ENCODE measurements at regions of chr12 and their contacts with region 1.

Region 1: DNA sequence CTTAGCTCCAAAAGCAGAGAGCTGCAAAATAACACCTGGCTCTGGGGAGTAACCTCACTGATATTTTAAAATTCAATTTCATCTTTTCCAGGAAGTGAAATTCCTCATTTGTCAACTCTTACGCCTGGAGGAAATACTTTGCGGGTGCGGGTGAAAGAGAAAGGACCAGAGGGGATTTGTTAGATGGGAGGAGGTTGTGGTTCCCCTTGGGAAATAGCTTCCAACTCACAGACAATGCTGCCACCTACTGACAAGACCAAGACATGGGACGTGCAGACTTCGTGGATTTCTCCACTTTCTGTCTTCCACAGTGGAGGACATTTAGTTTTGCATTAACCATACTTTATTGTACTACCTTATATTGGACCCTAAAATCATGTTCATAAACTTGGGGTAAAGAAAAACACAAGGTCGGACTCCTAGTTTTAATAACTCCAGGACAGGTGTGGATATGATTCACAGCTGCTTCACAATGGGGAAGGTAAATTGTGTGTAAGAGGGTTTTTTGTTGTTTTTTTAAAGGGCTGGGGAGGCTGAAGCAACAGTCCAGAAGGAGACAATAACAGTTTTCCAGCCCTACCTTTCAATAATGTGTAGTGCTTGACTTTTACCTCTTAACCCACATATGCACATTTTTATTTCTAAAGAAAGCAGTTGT is 10.8 kb downstream of the FBXL14 start:
- DNase-seq: peak in 1 of 2 donors; percentile 80
- ATAC-seq: peak; percentile 54 to 87 (median 84)
- H3K4me3 ChIP-seq: peak overlapping the region in 6 of 10 donors; percentile 11 to 36 (median 19)
- H3K27ac ChIP-seq: no peak overlapping the region
- H3K4me1 ChIP-seq: peaks cover 6 to 41% (median 26%) of the 10 kb centered on the region in 9 donors
- H3K27me3 ChIP-seq: no peaks in the 10 kb centered on the region
- CTCF ChIP-seq: peak; percentile 53 to 94 (median 90)

Region 2: DNA sequence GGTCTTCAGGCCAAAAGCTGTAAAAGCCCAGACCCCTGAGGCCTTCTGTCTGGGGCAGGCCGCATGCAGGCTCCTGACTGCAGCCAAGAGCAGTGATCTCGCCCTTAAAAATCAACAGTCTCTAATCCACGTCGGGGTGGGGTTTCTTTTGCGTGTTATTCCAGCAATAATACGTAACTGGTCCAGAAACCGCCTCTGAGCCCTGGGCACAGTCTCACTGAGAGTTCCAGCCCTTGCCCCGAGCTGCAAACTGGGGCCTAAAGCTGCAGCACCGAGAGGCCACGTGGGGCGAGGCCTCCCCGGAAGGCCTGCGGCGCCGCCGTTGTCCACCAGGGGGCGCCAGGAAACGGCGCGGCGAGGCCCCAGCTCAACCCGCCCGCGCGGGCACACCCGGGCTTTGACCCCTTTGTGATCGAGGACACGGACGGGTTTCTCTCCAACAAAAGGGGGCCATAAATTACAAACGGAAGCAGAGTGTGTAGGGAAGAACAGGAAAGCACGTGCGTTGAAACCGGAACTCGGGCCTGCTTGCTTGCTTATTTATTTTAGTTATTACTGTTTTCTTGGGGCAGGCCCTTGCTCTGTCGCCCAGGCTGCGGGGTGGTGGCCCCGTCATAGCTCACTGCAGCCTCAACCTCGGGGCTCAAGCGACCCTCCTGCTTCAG is 1007.5 kb before region 1 on chr12:
- intact Hi-C with region 1: loop called in 1 of 10 experiments (anchors 10 kb)
- DNase-seq: peak; percentile 68 to 87
- ATAC-seq: peak; percentile 35 to 77 (median 60)
- H3K4me3 ChIP-seq: peak overlapping the region in 5 of 10 donors; percentile 7 to 24 (median 19)
- H3K27ac ChIP-seq: peak overlapping the region; percentile 47 to 87 (median 76)
- H3K4me1 ChIP-seq: peaks cover 34 to 66% (median 56%) of the 10 kb centered on the region in 9 donors
- H3K27me3 ChIP-seq: no peaks in the 10 kb centered on the region
- CTCF ChIP-seq: peak; percentile 99 to 100 (median 100)

Region 3: GRCh38 chr12:1117970-1118563 is 465.5 kb before region 1 on chr12:
- intact Hi-C with region 1: loop called (anchors 1 to 5 kb)
- DNase-seq: peak; percentile 22 to 70
- ATAC-seq: peak in 6 of 8 donors; percentile 25 to 71 (median 63)
- H3K4me3 ChIP-seq: no peak overlapping the region
- H3K27ac ChIP-seq: no peak overlapping the region
- H3K4me1 ChIP-seq: peaks cover 0 to 3% (median 0%) of the 10 kb centered on the region in 9 donors
- H3K27me3 ChIP-seq: no peaks in the 10 kb centered on the region
- CTCF ChIP-seq: peak; percentile 78 to 97 (median 96)

Region 4: DNA sequence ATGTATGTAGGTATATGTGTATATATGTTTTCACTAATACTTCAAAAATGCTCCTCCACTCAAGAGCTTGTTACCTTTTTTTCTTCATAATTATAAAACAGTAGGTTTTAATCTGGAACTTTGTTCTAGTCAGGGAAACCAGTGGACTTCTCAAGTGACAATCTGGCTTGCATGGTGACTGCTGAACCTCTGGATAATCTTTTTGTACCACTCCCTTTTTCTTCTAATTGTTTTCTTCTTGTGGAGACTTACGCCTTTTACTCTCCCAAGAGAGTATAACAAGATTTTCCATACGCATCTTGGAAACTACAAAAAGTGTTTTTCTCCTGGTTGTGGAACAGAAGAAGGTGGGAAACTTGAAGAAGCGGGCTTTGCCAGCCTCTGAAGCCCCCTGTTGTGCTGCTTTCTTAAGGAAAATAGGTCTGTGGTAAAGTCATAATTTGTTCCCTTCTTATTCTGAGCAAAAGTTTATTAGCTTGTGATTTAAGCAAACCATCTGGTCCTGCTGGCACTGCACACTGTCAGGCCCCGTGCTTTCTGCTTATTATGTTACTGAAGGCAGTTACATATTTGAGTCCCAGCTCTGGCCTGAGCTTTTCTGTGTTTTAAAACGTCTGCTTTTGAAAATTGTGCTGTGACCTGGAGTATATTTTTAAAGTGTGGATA is 300.7 kb before region 1 on chr12:
- intact Hi-C with region 1: loop called in 5 of 10 experiments (anchors 5 to 10 kb)
- DNase-seq: peak; percentile 25 to 43
- ATAC-seq: peak in 7 of 8 donors; percentile 50 to 91 (median 83)
- H3K4me3 ChIP-seq: no peak overlapping the region
- H3K27ac ChIP-seq: peak overlapping the region in 8 of 10 donors; percentile 5 to 68 (median 36)
- H3K4me1 ChIP-seq: peaks cover 0 to 6% (median 0%) of the 10 kb centered on the region in 9 donors
- H3K27me3 ChIP-seq: no peaks in the 10 kb centered on the region
- CTCF ChIP-seq: no peak

Measured in heart right ventricle (tissue), 16 donors.